HEK293 (cell line): ENCODE measurements at regions of chr19 and their contacts with region 1.

Region 1: GRCh38 chr19:42132851-42133528 is 744 bp upstream of the POU2F2 start:
- H3K4me3 ChIP-seq: no peak overlapping the region
- H3K27ac ChIP-seq: no peak overlapping the region
- H3K4me1 ChIP-seq: no peaks in the 10 kb centered on the region
- CTCF ChIP-seq: peak; percentile 98

Region 2: GRCh38 chr19:41883821-41884733 is 248.9 kb before region 1 on chr19:
- CTCF ChIA-PET with region 1: no interaction called
- POLR2A ChIA-PET with region 1: no interaction called
- H3K4me3 ChIP-seq: peak overlapping the region; percentile 85
- H3K27ac ChIP-seq: peak overlapping the region; percentile 62; the same call in 1 of the 2 replicates
- H3K4me1 ChIP-seq: peaks cover 11% of the 10 kb centered on the region; the same call in 1 of the 2 replicates
- CTCF ChIP-seq: peak; percentile 78; the same call in 1 of the 2 replicates

Region 3: DNA sequence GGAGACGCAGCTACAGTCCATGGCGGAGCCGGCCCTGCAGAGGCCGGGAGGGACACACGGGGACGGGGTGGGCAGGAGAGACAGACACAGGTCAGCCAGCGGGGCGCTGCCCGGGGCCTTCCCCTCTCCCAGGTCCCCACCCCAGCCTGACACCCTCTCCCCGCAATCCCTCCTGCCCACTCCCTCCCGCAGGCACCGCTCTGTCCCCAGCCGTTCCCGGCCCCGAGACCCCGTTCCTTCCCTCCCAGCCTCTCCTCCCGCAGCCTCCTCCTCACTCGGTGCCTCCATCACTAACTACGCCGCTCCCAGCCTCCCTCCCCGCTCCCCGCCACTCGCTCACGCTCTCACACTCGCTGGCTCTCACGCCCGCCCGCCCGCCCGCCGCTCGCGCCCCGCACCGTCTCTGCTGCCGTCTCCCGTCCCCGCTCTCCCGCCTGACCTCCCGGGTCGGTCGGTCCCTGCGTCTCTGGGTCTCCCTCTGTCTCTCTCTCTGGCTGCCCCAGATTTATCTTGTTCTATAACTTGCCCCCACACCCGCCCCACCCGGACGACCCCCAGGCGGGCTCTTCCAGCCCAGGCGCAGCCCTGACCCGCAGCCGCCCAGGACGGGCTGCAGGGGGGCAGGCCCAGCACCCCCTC is 220.0 kb before region 1 on chr19:
- CTCF ChIA-PET with region 1: no interaction called
- POLR2A ChIA-PET with region 1: no interaction called
- H3K4me3 ChIP-seq: no peak overlapping the region
- H3K27ac ChIP-seq: no peak overlapping the region
- H3K4me1 ChIP-seq: no peaks in the 10 kb centered on the region
- CTCF ChIP-seq: no peak

Region 4: DNA sequence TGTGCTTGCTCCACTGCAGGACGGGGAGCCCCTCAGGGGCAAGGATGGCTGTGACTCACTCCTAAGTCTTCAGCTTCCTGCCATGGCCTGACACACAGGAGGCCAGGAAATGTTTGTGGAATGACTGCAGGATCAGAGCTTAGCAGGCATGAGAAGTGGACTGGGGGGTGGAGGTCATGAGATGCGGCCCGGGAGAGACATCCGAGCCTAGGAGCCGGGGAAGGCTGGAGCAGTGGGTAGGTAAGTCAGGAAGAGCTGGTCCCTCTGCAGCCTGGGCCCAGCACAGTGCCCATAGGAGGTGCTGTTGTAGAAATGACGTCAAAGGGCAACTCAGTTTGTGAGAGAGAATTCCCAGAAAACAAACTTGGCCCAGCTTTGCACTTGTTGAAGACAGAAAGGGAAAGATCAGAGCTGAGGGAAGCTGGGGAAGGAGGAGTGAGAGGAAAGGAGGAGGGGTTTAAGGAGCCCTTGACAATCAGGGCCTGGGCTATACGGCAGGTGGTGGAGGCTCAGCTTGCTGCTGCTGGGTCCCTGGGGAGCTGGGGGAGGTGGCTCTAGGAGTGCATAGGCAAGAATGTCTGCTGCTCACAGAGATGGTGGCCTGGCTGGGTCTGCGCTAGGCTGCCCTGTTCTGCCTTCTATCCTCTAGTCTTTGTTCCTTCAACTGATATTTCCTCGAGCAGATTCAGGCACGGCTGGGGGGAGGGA is 19.2 kb before region 1 on chr19:
- CTCF ChIA-PET with region 1: interaction called, 122 read pairs
- POLR2A ChIA-PET with region 1: interaction called, 3 read pairs
- H3K4me3 ChIP-seq: no peak overlapping the region
- H3K27ac ChIP-seq: 0 out of 2 replicates have a peak overlapping the region, but pooled peaks have one; percentile 5
- H3K4me1 ChIP-seq: peaks cover 9% of the 10 kb centered on the region; the same call in 1 of the 2 replicates
- CTCF ChIP-seq: peak; percentile 40; the same call in 1 of the 2 replicates

Region 5: GRCh38 chr19:42176990-42177685 is 44.1 kb after region 1 on chr19:
- CTCF ChIA-PET with region 1: interaction called, 22 read pairs
- POLR2A ChIA-PET with region 1: no interaction called
- H3K4me3 ChIP-seq: peak overlapping the region; percentile 27; the same call in 1 of the 2 replicates
- H3K27ac ChIP-seq: no peak overlapping the region
- H3K4me1 ChIP-seq: peaks cover 10% of the 10 kb centered on the region
- CTCF ChIP-seq: 0 out of 2 replicates have a peak, but pooled peaks have one; percentile 45

Region 6: GRCh38 chr19:42199440-42200115 is 66.6 kb after region 1 on chr19:
- CTCF ChIA-PET with region 1: no interaction called
- POLR2A ChIA-PET with region 1: no interaction called
- H3K4me3 ChIP-seq: no peak overlapping the region
- H3K27ac ChIP-seq: no peak overlapping the region
- H3K4me1 ChIP-seq: no peaks in the 10 kb centered on the region
- CTCF ChIP-seq: no peak

Region 7: GRCh38 chr19:42283143-42284065 is 150.4 kb after region 1 on chr19:
- CTCF ChIA-PET with region 1: interaction called, 13 read pairs
- POLR2A ChIA-PET with region 1: no interaction called
- H3K4me3 ChIP-seq: peak overlapping the region; percentile 39
- H3K27ac ChIP-seq: peak overlapping the region; percentile 90
- H3K4me1 ChIP-seq: peaks cover 51% of the 10 kb centered on the region
- CTCF ChIP-seq: peak; percentile 84

Region 8: GRCh38 chr19:42378225-42379215 is 245.5 kb after region 1 on chr19:
- CTCF ChIA-PET with region 1: no interaction called
- POLR2A ChIA-PET with region 1: no interaction called
- H3K4me3 ChIP-seq: no peak overlapping the region
- H3K27ac ChIP-seq: no peak overlapping the region
- H3K4me1 ChIP-seq: no peaks in the 10 kb centered on the region
- CTCF ChIP-seq: no peak